ENCODE measurements at regions of chr3 and their contacts with region 1.

Region 1: GRCh38 chr3:66500576-66501482 is at the start of gene LRIG1:
- DNase-seq: peak; percentile 92
- ATAC-seq: peak; percentile 93
- H3K4me3 ChIP-seq: peak within 1 kb of the TSS; percentile 83 to 96 (median 94)
- H3K27ac ChIP-seq: peak within 1 kb of the TSS; percentile 71
- H3K4me1 ChIP-seq: peaks cover 71% of the 10 kb centered on the region
- H3K27me3 ChIP-seq: peaks cover 0 to 14% of the 10 kb centered on the region in 2 experiments; a peak in 3 of 5 replicates
- CTCF ChIP-seq: peak; percentile 44
- EP300 ChIP-seq: peak in 1 of 2 experiments; percentile 45; a peak in 1 of 4 replicates
- POLR2A ChIP-seq: peak; percentile 72 to 76
- RAD21 ChIP-seq: peak; percentile 22; the same call in 1 of the 2 replicates
- total RNA-seq, gene LRIG1: 16.3 and 24.8 TPM in 2 replicates

Region 2: GRCh38 chr3:66407611-66408218 is 93.1 kb before region 1 on chr3:
- CTCF ChIA-PET with region 1: no interaction called
- POLR2A ChIA-PET with region 1: no interaction called
- in situ Hi-C with region 1: loop called (anchors 5 kb)
- intact Hi-C with region 1: loop called (anchors 2 kb)
- DNase-seq: peak; percentile 48
- ATAC-seq: peak; percentile 92
- H3K4me3 ChIP-seq: no peak overlapping the region
- H3K27ac ChIP-seq: no peak overlapping the region
- H3K4me1 ChIP-seq: peaks cover 9% of the 10 kb centered on the region
- H3K27me3 ChIP-seq: no peaks in the 10 kb centered on the region
- CTCF ChIP-seq: peak; percentile 96
- EP300 ChIP-seq: no peak
- POLR2A ChIP-seq: no peak
- RAD21 ChIP-seq: peak; percentile 98

Region 3: DNA sequence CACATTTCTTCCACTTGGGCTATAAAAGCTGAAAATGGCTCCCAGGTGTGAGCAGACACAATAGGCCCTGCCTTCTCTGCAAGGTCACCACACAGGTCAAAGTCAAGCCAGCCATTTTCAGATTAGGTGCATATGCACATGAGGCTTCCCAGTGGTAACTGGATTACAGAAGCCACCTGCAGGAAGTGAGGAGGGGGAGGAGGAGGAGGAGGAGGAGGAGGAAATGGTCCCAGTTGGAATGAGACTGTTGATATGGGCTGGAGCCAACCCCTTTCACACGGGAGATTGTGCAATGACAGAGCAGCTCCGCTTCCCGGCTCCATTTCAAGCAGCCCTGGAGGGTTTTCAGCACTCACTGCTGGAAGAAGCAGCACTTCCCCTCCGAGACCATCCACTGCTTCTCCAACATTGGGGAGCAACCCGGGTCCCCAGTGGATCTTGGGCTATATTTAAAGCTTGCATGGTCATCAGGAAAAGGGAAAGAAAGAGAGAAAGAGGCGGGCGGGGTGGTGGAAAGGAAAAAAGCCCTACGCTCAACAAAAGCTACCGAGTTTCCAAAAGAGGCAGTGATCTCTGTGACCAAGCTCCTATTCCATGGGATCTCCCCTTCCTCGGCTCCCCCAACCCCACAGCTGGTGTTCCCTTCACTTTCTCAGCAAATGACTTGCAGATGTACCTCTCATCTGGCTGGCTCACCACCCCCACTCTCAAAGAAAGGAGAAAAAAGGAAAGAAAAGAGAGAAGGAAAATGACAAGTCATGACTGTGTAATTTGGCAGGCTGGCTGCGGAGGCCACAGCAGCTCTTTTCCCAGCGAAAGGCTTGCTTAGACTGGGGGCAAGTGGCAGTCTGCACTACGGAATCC is 58.3 kb before region 1 on chr3:
- CTCF ChIA-PET with region 1: no interaction called
- POLR2A ChIA-PET with region 1: no interaction called
- in situ Hi-C with region 1: no loop called
- intact Hi-C with region 1: loop called (anchors 5 kb)
- DNase-seq: peak; percentile 75
- ATAC-seq: peak; percentile 89
- H3K4me3 ChIP-seq: peak overlapping the region in 1 of 3 experiments; percentile 7; a peak in 1 of 6 replicates
- H3K27ac ChIP-seq: peak overlapping the region; percentile 58
- H3K4me1 ChIP-seq: peaks cover 34% of the 10 kb centered on the region
- H3K27me3 ChIP-seq: no peaks in the 10 kb centered on the region
- CTCF ChIP-seq: no peak
- EP300 ChIP-seq: 0 out of 4 replicates have a peak, but pooled peaks of 1 of the 2 experiments have one; percentile 21
- POLR2A ChIP-seq: no peak
- RAD21 ChIP-seq: no peak

Region 4: DNA sequence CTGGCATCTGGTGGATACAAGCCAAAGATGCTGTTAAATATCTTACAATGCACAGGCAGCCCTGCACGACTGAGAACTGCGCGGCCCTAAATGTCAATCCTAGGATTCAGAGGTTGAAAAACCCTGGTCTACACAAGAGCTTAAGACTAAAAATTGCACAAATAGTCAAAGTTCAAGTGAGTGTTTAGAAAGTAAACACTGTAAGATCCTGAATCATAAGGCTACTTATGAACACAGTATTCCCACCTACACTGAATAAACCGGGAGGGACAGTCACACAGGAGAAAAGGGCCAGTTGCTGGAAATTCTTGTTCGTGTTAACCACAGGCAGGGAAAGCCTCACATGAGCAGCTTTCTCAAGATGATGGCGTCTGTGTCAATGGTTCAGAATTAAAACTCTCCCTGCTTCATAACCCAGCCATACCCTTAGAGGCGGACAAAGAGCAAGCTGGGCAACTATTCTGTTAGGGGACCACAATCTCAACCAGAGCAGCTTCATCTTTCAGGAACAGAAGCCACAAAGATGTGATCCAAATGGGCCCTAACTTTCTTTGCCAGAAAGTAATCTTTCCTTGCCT is 37.7 kb before region 1 on chr3:
- CTCF ChIA-PET with region 1: no interaction called
- POLR2A ChIA-PET with region 1: interaction called, 4 read pairs
- in situ Hi-C with region 1: no loop called
- intact Hi-C with region 1: loop called (anchors 2 kb)
- DNase-seq: peak; percentile 82
- ATAC-seq: peak; percentile 91
- H3K4me3 ChIP-seq: peak overlapping the region in 1 of 3 experiments; percentile 20; a peak in 3 of 6 replicates
- H3K27ac ChIP-seq: peak overlapping the region; percentile 73
- H3K4me1 ChIP-seq: peaks cover 78% of the 10 kb centered on the region
- H3K27me3 ChIP-seq: no peaks in the 10 kb centered on the region
- CTCF ChIP-seq: no peak
- EP300 ChIP-seq: peak in 1 of 2 experiments; percentile 90; a peak in 2 of 4 replicates
- POLR2A ChIP-seq: peak in 1 of 2 experiments; percentile 36; a peak in 1 of 4 replicates
- RAD21 ChIP-seq: no peak

Region 5: GRCh38 chr3:66520724-66521123 is 19.9 kb after region 1 on chr3:
- CTCF ChIA-PET with region 1: no interaction called
- POLR2A ChIA-PET with region 1: no interaction called
- in situ Hi-C with region 1: no loop called
- intact Hi-C with region 1: no loop called
- DNase-seq: no peak
- ATAC-seq: no peak
- H3K4me3 ChIP-seq: no peak overlapping the region
- H3K27ac ChIP-seq: no peak overlapping the region
- H3K4me1 ChIP-seq: no peaks in the 10 kb centered on the region
- H3K27me3 ChIP-seq: peaks cover 0 to 9% of the 10 kb centered on the region in 2 experiments; a peak in 2 of 5 replicates
- CTCF ChIP-seq: no peak
- EP300 ChIP-seq: no peak
- POLR2A ChIP-seq: no peak
- RAD21 ChIP-seq: no peak

Region 6: GRCh38 chr3:66822186-66823008 is 321.6 kb after region 1 on chr3:
- CTCF ChIA-PET with region 1: no interaction called
- POLR2A ChIA-PET with region 1: no interaction called
- in situ Hi-C with region 1: no loop called
- intact Hi-C with region 1: loop called (anchors 5 kb)
- DNase-seq: peak; percentile 49
- ATAC-seq: peak; percentile 81
- H3K4me3 ChIP-seq: no peak overlapping the region
- H3K27ac ChIP-seq: no peak overlapping the region
- H3K4me1 ChIP-seq: peaks cover 62% of the 10 kb centered on the region
- H3K27me3 ChIP-seq: no peaks in the 10 kb centered on the region
- CTCF ChIP-seq: peak; percentile 70
- EP300 ChIP-seq: no peak
- POLR2A ChIP-seq: no peak
- RAD21 ChIP-seq: peak; percentile 62

Measured in HepG2 (cell line).